PC-3 (cell line): ENCODE measurements at regions of chr19 and their contacts with region 1.

Region 1: DNA sequence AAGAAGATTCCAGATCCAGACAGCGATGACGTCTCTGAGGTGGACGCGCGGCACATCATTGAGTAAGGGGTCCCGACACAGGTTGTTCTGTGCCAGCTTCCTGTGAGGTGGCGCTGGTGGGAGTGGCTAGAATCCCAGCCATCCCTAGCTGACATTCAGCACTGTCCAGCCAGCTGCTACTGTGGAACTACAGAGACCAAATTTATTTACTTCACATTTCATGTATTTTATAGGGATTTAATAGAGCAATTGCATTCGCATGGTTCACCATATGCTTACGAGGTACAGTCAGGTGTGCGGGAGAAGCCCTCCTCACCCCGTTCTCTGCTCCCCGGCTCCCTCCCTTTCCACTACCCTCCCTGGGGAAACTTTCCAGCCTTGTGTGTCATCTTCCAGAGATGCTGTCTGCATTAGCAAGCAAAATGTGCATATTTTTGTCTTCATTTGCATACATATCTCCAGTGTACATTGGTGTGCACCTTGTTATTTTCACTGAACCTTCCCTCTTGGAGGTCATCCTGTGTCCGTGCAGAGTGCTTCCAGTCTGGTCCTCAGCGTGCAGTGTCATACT is 47.2 kb downstream of the SMARCA4 start:
- DNase-seq: no peak
- ATAC-seq: no peak
- H3K4me3 ChIP-seq: no peak overlapping the region
- H3K27ac ChIP-seq: no peak overlapping the region
- H3K4me1 ChIP-seq: no peaks in the 10 kb centered on the region
- H3K27me3 ChIP-seq: no peaks in the 10 kb centered on the region
- CTCF ChIP-seq: no peak

Region 2: DNA sequence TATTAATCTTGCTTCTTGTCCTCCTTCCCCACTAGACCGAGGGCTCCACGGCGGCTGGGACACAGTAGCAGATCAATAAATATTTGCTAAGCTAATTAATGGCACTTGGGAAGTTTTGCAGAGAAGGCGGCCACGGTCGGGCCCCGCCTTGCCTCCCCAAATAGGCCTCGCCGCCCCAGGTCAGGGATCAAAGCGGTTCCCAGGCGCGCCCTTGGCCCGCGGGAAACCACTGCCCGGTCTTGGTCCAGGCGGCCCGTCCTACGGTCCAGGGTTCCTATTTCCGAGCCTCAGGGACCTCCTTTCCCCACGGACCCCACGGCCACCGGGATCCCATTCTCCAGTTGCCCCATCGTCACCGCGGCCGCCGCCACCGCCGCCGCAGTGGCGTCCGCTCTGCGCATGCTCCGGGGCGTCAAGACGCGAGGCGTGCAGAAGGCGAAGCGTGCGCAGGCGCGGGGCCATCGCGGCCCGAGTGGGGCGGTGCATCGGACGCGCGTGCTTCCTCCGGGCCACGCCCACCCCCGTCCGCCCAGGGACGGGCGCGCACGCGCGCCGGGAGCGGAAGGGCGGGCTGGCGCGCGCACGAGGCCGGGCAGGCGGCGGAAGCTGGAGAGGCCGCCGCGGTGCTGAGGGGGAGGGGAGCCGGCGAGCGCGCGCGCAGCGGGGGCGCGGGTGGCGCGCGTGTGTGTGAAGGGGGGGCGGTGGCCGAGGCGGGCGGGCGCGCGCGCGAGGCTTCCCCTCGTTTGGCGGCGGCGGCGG is 47.6 kb before region 1 on chr19 and contains the start of gene SMARCA4:
- CTCF ChIA-PET with region 1: no interaction called
- POLR2A ChIA-PET with region 1: interaction called, 11 read pairs
- intact Hi-C with region 1: no loop called
- DNase-seq: peak; percentile 99
- ATAC-seq: peak; percentile 84
- H3K4me3 ChIP-seq: peak within 1 kb of the TSS; percentile 82
- H3K27ac ChIP-seq: peak within 1 kb of the TSS; percentile 45
- H3K4me1 ChIP-seq: peaks cover 23% of the 10 kb centered on the region
- H3K27me3 ChIP-seq: no peaks in the 10 kb centered on the region
- CTCF ChIP-seq: no peak
- total RNA-seq, gene SMARCA4: 197 and 316 TPM in 2 replicates

Region 3: DNA sequence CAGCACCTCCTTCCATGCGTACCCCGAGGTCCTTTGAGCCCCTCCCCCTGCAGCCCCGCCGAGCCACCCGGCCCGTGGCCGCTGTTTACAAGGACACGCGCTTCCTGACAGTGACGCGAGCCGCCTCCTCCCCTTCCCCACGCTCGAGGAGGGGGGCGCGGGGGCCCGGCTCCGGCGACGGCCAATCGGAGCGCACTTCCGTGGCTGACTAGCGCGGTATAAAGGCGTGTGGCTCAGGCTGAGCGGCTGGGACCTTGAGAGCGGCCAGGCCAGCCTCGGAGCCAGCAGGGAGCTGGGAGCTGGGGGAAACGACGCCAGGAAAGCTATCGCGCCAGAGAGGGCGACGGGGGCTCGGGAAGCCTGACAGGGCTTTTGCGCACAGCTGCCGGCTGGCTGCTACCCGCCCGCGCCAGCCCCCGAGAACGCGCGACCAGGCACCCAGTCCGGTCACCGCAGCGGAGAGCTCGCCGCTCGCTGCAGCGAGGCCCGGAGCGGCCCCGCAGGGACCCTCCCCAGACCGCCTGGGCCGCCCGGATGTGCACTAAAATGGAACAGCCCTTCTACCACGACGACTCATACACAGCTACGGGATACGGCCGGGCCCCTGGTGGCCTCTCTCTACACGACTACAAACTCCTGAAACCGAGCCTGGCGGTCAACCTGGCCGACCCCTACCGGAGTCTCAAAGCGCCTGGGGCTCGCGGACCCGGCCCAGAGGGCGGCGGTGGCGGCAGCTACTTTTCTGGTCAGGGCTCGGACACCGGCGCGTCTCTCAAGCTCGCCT is 1783.4 kb after region 1 on chr19 and contains the start of gene JUNB:
- CTCF ChIA-PET with region 1: no interaction called
- POLR2A ChIA-PET with region 1: no interaction called
- intact Hi-C with region 1: no loop called
- DNase-seq: peak; percentile 99
- ATAC-seq: peak; percentile 43
- H3K4me3 ChIP-seq: peak within 1 kb of the TSS; percentile 90
- H3K27ac ChIP-seq: peak within 1 kb of the TSS; percentile 95
- H3K4me1 ChIP-seq: peaks cover 51% of the 10 kb centered on the region
- H3K27me3 ChIP-seq: no peaks in the 10 kb centered on the region
- CTCF ChIP-seq: no peak
- total RNA-seq, gene JUNB: 343 and 391 TPM in 2 replicates